ENCODE measurements at regions of chr22 and their contacts with region 1.

Region 1: GRCh38 chr22:36409911-36410756 is 22.4 kb upstream of the MYH9 start:
- DNase-seq: peak; percentile 43 to 90 (median 68)
- ATAC-seq: peak; percentile 72 to 76
- H3K4me3 Mint-ChIP-seq: peak overlapping the region; percentile 64 to 86 (median 80)
- H3K27ac Mint-ChIP-seq: peak overlapping the region; percentile 75 to 94 (median 87)
- H3K4me1 Mint-ChIP-seq: peaks cover 20 to 66% (median 55%) of the 10 kb centered on the region in 4 donors
- H3K27me3 Mint-ChIP-seq: no peaks in the 10 kb centered on the region

Region 2: GRCh38 chr22:36374603-36375024 is 35.5 kb before region 1 on chr22:
- POLR2A ChIA-PET with region 1: interaction called, 20 read pairs
- DNase-seq: peak in 2 of 10 donors; percentile 9 to 49
- ATAC-seq: no peak
- H3K4me3 Mint-ChIP-seq: peak overlapping the region; percentile 48 to 96 (median 77)
- H3K27ac Mint-ChIP-seq: peak overlapping the region; percentile 90 to 99 (median 96)
- H3K4me1 Mint-ChIP-seq: peaks cover 44 to 97% (median 93%) of the 10 kb centered on the region in 4 donors
- H3K27me3 Mint-ChIP-seq: no peaks in the 10 kb centered on the region

Region 3: GRCh38 chr22:36387752-36388518 is 22.2 kb before region 1 on chr22 and contains the start of gene MYH9:
- POLR2A ChIA-PET with region 1: interaction called, 35 read pairs
- DNase-seq: peak; percentile 96 to 99 (median 98)
- ATAC-seq: peak; percentile 71 to 81
- H3K4me3 Mint-ChIP-seq: peak within 1 kb of the TSS; percentile 87 to 98 (median 92)
- H3K27ac Mint-ChIP-seq: peak within 1 kb of the TSS; percentile 78 to 99 (median 96)
- H3K4me1 Mint-ChIP-seq: peaks cover 20 to 56% (median 38%) of the 10 kb centered on the region in 4 donors
- H3K27me3 Mint-ChIP-seq: no peaks in the 10 kb centered on the region
- polyA plus RNA-seq, gene MYH9: 51.2 to 389 (median 105) TPM

Region 4: GRCh38 chr22:36423461-36424404 is 13.6 kb after region 1 on chr22:
- POLR2A ChIA-PET with region 1: interaction called, 10 read pairs
- DNase-seq: no peak
- ATAC-seq: no peak
- H3K4me3 Mint-ChIP-seq: peak overlapping the region in 1 of 10 donors; percentile 34
- H3K27ac Mint-ChIP-seq: peak overlapping the region in 2 of 10 donors; percentile 6 to 25
- H3K4me1 Mint-ChIP-seq: peaks cover 10 to 49% (median 38%) of the 10 kb centered on the region in 4 donors
- H3K27me3 Mint-ChIP-seq: no peaks in the 10 kb centered on the region